Heart left ventricle (tissue), 16 donors: ENCODE measurements at regions of chr6 and their contacts with region 1.

Region 1: GRCh38 chr6:142207265-142207877 is 60.3 kb downstream of the VTA1 start:
- DNase-seq: peak in 3 of 5 donors; percentile 20 to 38 (median 28)
- ATAC-seq: peak in 3 of 4 donors; percentile 76 to 82 (median 79)
- H3K4me3 ChIP-seq: no peak overlapping the region
- H3K27ac ChIP-seq: no peak overlapping the region
- H3K4me1 ChIP-seq: no peaks in the 10 kb centered on the region
- H3K27me3 ChIP-seq: no peaks in the 10 kb centered on the region
- CTCF ChIP-seq: peak; percentile 62 to 84 (median 72)
- POLR2A ChIP-seq: no peak

Region 2: DNA sequence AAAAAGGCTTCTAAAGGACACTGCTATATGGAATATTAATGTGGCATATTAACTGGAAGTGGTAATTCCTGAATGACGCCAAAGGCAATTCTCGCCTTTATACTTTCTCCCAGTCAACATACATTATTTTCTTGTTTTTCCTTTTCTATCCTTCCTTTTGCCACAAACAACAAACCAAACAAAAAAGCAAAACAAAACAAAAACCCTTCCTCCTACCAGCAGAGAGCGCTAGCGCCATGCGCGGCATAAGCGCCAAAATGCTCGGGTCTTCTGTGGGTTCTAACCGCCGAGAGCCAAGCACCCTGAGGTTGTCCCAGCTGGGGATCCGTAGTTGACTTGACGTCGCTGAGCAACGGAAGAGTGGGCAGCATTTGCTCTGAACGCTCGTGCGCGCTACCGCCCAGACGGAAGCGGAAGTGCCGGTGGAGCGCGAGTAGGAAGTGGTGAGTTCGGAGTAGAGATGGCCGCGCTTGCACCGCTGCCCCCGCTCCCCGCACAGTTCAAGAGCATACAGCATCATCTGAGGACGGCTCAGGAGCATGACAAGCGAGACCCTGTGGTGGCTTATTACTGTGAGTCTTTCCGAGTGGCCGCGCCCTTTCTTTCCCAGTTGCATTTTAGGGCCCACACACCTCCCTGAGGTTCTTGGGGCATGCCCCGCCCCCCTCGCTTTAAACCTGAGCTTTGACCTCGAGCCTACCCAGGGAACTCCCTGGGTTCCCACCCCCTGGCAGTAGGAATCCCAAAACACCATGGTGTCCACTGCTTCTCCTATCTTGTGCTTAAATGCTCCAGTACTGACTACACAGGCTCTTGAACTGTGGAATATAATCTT is 60.3 kb before region 1 on chr6 and contains the starts of genes NMBR and VTA1:
- intact Hi-C with region 1: loop called in 8 of 10 experiments (anchors 2 to 5 kb)
- DNase-seq: peak; percentile 97 to 98 (median 98)
- ATAC-seq: peak; percentile 99 to 100 (median 100)
- H3K4me3 ChIP-seq: peak within 1 kb of the TSS; percentile 75 to 97 (median 84)
- H3K27ac ChIP-seq: peak within 1 kb of the TSS in 11 of 12 donors; percentile 38 to 82 (median 68)
- H3K4me1 ChIP-seq: peaks cover 0 to 34% (median 18%) of the 10 kb centered on the region in 12 donors
- H3K27me3 ChIP-seq: no peaks in the 10 kb centered on the region
- CTCF ChIP-seq: peak; percentile 84 to 98 (median 91)
- POLR2A ChIP-seq: peak in 1 of 2 donors; percentile 61
- total RNA-seq, gene NMBR: 0.67 TPM in 1 of 9 donors, not detected in the others
- total RNA-seq, gene VTA1: 32.0 to 49.4 (median 41.0) TPM

Region 3: GRCh38 chr6:142155895-142156757 is 51.2 kb before region 1 on chr6:
- intact Hi-C with region 1: loop called in 3 of 10 experiments (anchors 2 to 5 kb)
- DNase-seq: no peak
- ATAC-seq: peak in 1 of 4 donors; percentile 54
- H3K4me3 ChIP-seq: no peak overlapping the region
- H3K27ac ChIP-seq: no peak overlapping the region
- H3K4me1 ChIP-seq: peaks cover 0 to 24% (median 2%) of the 10 kb centered on the region in 12 donors
- H3K27me3 ChIP-seq: no peaks in the 10 kb centered on the region
- CTCF ChIP-seq: peak; percentile 28 to 54 (median 44)
- POLR2A ChIP-seq: no peak